ENCODE measurements at regions of chr12 and their contacts with region 1.

Region 1: GRCh38 chr12:12704593-12705230 is 8.7 kb upstream of the GPR19 start:
- DNase-seq: no peak
- ATAC-seq: peak; percentile 99
- H3K4me3 ChIP-seq: no peak overlapping the region
- H3K27ac ChIP-seq: peak overlapping the region; percentile 42
- H3K4me1 ChIP-seq: peaks cover 6% of the 10 kb centered on the region
- H3K27me3 ChIP-seq: no peaks in the 10 kb centered on the region
- CTCF ChIP-seq: peak; percentile 91

Region 2: DNA sequence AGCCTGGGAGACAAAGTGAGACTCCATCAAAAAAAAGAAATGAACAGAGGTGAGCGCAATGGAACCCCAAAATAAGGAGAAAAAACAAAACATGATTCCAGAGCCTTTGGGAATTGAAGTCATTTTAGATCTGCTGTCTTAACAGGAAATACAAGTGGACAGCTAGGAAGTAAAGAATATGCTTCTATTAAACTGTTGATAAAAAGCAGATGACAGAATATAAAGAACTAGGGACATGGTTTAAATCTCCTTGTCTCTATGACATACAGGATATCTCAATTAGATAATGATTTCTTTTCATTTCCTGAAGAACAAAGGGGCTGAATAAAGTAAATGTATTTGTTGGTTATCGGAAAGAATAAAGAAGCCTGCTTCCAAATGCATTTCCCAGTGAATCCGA is 1104.5 kb before region 1 on chr12:
- CTCF ChIA-PET with region 1: no interaction called
- POLR2A ChIA-PET with region 1: interaction called, 10 read pairs
- in situ Hi-C with region 1: no loop called
- intact Hi-C with region 1: no loop called
- DNase-seq: no peak
- ATAC-seq: no peak
- H3K4me3 ChIP-seq: no peak overlapping the region
- H3K27ac ChIP-seq: no peak overlapping the region
- H3K4me1 ChIP-seq: no peaks in the 10 kb centered on the region
- H3K27me3 ChIP-seq: no peaks in the 10 kb centered on the region
- CTCF ChIP-seq: no peak

Region 3: GRCh38 chr12:12376646-12377448 is 327.9 kb before region 1 on chr12:
- CTCF ChIA-PET with region 1: interaction called, 5 read pairs
- POLR2A ChIA-PET with region 1: no interaction called
- in situ Hi-C with region 1: no loop called
- intact Hi-C with region 1: loop called (anchors 2 kb)
- DNase-seq: peak; percentile 52
- ATAC-seq: peak; percentile 83
- H3K4me3 ChIP-seq: no peak overlapping the region
- H3K27ac ChIP-seq: no peak overlapping the region
- H3K4me1 ChIP-seq: no peaks in the 10 kb centered on the region
- H3K27me3 ChIP-seq: no peaks in the 10 kb centered on the region
- CTCF ChIP-seq: peak; percentile 59; the same call in 1 of the 2 replicates

Region 4: DNA sequence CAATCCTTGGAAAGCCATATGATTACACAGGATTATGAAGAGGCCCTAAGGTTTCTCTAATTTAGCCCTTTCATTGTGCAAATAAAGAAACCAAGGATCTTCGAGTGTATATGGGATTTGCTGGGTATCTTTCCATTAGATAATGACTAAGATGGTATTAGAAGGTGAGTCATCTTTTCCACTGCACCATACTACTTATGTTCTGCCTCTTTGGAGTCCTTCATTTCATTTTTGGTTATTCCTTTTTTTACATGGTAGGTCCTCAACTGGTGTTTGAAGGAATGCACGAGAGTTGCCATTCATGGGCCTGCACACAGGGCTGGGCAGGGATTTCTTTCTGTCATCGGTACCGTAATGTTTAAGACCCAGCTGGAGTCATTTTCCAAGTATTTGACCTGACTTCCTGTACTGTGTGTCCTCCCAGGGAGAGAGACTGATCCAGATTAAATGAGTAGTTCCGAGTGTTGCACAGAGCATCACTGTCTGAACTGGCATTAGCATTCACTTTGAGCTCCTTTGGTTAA is 262.1 kb before region 1 on chr12:
- CTCF ChIA-PET with region 1: no interaction called
- POLR2A ChIA-PET with region 1: no interaction called
- in situ Hi-C with region 1: no loop called
- intact Hi-C with region 1: no loop called
- DNase-seq: no peak
- ATAC-seq: no peak
- H3K4me3 ChIP-seq: no peak overlapping the region
- H3K27ac ChIP-seq: no peak overlapping the region
- H3K4me1 ChIP-seq: no peaks in the 10 kb centered on the region
- H3K27me3 ChIP-seq: no peaks in the 10 kb centered on the region
- CTCF ChIP-seq: no peak

Region 5: DNA sequence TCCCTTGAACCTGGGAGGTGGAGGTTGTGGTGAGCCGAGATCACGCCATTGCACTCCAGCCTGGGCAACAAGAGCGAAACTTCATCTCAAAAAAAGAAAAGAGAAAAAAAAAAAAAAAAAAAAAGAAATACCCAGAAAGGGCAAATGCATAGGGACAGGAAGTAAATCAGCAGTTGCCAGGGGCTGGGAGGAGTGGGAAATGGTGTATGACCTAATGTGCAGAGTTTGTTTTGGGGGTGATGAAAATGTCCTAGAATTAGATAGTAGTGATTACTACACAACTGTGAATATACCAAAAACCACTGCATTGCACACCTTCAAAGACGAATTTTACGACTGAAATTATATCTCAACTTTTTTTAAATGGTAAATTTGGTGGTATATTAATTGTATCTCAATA is 162.4 kb before region 1 on chr12:
- CTCF ChIA-PET with region 1: no interaction called
- POLR2A ChIA-PET with region 1: interaction called, 12 read pairs
- in situ Hi-C with region 1: no loop called
- intact Hi-C with region 1: no loop called
- DNase-seq: no peak
- ATAC-seq: no peak
- H3K4me3 ChIP-seq: no peak overlapping the region
- H3K27ac ChIP-seq: no peak overlapping the region
- H3K4me1 ChIP-seq: no peaks in the 10 kb centered on the region
- H3K27me3 ChIP-seq: no peaks in the 10 kb centered on the region
- CTCF ChIP-seq: no peak

Region 6: DNA sequence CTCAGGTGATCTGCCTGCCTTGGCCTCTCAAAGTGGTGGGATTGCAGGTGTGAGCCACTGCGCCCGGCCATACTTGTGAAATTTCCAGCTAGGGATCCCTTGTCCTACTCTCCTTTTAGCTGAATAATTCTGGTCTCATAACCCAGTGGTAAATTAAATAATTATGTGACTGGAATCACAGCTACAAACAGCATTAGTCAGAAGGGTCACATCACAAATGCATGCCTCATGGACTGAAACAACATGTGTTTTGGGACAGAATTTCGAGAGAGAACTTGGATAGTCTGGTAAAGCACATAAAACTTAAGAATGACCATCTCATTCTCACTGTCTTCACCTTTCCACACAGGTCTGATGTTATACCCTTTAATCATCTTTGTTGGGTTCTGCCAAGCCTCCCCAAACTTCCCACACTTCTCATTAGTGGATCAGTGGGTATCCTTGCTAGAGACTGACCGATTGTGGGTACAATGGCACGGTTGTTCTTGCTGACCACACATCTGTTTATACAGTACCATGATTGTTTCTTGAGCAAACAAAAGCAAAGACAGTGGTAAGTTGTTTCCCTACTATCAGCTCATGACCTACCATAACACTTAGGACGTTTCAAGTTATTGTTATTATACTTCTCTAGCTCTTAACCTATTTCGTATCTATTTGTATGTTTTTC is 242.1 kb after region 1 on chr12:
- CTCF ChIA-PET with region 1: no interaction called
- POLR2A ChIA-PET with region 1: no interaction called
- in situ Hi-C with region 1: no loop called
- intact Hi-C with region 1: no loop called
- DNase-seq: no peak
- ATAC-seq: peak; percentile 89
- H3K4me3 ChIP-seq: no peak overlapping the region
- H3K27ac ChIP-seq: no peak overlapping the region
- H3K4me1 ChIP-seq: peaks cover 4% of the 10 kb centered on the region; the same call in 1 of the 2 replicates
- H3K27me3 ChIP-seq: no peaks in the 10 kb centered on the region
- CTCF ChIP-seq: no peak

Measured in Panc1 (cell line).